ENCODE measurements at regions of chr11 and their contacts with region 1.

Region 1: GRCh38 chr11:45964911-45965389 is 42.5 kb downstream of the LARGE2 start:
- DNase-seq: peak in 1 of 2 donors; percentile 79
- H3K4me3 ChIP-seq: no peak overlapping the region
- H3K27ac ChIP-seq: peak overlapping the region; percentile 27 to 60
- H3K4me1 ChIP-seq: peaks cover 0 to 2% of the 10 kb centered on the region in 2 donors
- H3K27me3 ChIP-seq: no peaks in the 10 kb centered on the region
- CTCF ChIP-seq: peak; percentile 86 to 90 (median 90)

Region 2: DNA sequence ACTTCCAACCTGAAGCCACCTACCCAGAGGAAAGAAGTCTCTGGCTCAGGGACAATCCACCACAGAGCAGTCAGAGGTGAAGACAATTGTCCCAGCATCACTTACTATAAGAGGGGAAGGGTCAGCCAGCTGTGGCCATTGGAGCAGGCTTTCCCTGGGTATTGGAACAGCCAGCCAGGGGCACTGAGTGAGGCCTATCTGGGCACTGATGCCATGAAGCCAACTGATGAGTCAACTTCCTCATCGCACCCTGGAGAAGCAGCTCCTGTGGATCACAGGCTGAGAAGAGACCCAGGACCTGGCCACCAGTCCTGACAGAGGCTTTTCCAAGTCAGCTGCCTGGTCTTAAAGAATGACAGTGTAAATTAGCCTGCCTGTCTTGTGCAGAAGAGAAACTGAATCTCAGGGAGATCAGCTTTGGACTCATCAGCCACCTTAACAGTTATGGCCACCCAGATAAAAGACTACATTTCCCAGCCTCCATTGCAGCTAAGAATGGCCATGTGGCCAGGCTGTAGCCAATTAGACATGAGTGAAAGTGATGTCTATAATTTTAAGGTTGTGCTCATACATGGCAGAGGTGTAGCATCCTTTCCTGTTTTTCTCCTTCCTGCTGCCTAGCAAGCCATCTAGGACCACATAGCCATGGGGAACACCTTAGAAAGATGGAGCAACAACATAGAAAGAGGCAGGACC is 318.5 kb before region 1 on chr11:
- intact Hi-C with region 1: no loop called
- DNase-seq: no peak
- H3K4me3 ChIP-seq: no peak overlapping the region
- H3K27ac ChIP-seq: no peak overlapping the region
- H3K4me1 ChIP-seq: no peaks in the 10 kb centered on the region
- H3K27me3 ChIP-seq: no peaks in the 10 kb centered on the region
- CTCF ChIP-seq: no peak

Region 3: GRCh38 chr11:45993531-45994001 is 28.6 kb after region 1 on chr11:
- intact Hi-C with region 1: no loop called
- DNase-seq: peak in 1 of 2 donors; percentile 75
- H3K4me3 ChIP-seq: peak overlapping the region in 1 of 2 donors; percentile 15
- H3K27ac ChIP-seq: peak overlapping the region; percentile 59 to 67
- H3K4me1 ChIP-seq: peaks cover 2 to 30% of the 10 kb centered on the region in 2 donors
- H3K27me3 ChIP-seq: no peaks in the 10 kb centered on the region
- CTCF ChIP-seq: no peak

Region 4: DNA sequence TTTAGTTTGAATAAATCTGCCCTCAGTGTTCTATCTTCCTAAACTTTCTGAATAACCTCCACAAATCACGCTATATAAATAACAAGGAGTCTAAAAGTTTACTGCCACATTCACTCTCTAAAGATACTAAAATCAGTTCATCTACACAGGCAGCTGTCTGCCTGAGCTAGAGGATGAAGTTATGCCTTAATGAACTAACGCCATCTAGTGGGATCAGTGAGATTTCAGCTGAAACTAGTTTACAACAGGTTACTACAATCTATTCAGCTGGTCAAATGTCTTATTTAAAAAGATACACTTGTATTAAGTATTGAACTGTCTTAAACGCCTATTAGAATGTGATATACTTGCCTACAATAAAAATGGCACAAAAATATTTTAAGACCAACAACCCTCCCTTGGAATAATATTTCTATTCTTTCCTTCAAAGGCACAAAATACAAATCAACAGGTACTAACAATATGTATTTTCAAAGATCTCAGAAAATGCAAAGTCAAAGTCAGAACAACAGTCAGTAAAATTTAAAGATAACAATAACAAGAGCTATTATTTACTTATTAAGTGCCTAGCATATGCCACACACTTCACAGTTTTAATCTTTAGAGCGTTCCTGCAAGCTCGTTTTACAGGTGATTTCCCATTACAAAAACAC is 41.6 kb after region 1 on chr11:
- intact Hi-C with region 1: loop called (anchors 1 kb)
- DNase-seq: no peak
- H3K4me3 ChIP-seq: no peak overlapping the region
- H3K27ac ChIP-seq: no peak overlapping the region
- H3K4me1 ChIP-seq: peaks cover 3 to 30% of the 10 kb centered on the region in 2 donors
- H3K27me3 ChIP-seq: no peaks in the 10 kb centered on the region
- CTCF ChIP-seq: peak; percentile 54 to 81 (median 71)